GM12878 (cell line): ENCODE measurements at regions of chr1 and their contacts with region 1.

Region 1: DNA sequence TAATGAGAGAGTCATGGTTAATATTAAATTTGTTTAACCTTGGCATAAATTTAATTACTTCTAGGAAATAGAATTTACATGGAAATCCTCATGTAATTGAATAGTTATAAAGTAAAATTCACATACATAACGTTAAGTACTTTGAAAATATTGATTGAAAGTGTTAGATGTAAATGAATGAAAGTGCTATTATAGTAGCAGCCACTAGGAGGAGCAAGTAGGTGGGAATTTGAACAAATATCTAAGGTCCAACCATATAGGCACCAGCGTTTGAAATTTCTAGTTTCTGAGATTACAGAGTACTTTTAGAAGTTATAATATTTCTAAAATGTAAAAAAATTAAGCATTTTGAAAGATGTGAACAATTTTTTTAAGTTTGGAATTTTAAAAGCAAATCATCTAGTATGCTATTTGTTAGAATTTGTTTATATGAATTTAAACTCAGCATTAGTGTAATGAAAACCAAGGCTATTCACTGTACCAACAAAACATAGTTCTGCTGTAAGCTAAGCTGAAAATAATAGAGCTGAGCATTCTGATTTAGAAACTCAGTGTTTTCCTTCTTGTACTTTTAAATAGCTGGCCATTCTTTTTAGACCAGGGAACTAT is 3.3 kb downstream of the B3GALT2 start:
- DNase-seq: no peak
- ATAC-seq: peak; percentile 79
- H3K4me3 ChIP-seq: no peak overlapping the region
- H3K27ac ChIP-seq: no peak overlapping the region
- H3K4me1 ChIP-seq: no peaks in the 10 kb centered on the region
- H3K27me3 ChIP-seq: no peaks in the 10 kb centered on the region
- CTCF ChIP-seq: peak; percentile 61 to 77 (median 65)
- EP300 ChIP-seq: no peak
- POLR2A ChIP-seq: no peak
- RAD21 ChIP-seq: peak; percentile 84

Region 2: GRCh38 chr1:191912517-191912916 is 1270.6 kb before region 1 on chr1:
- CTCF ChIA-PET with region 1: no interaction called
- POLR2A ChIA-PET with region 1: no interaction called
- RAD21 ChIA-PET with region 1: no interaction called
- SMC1A ChIA-PET with region 1: no interaction called
- in situ Hi-C with region 1: no loop called
- intact Hi-C with region 1: no loop called
- DNase-seq: no peak
- ATAC-seq: peak; percentile 65
- H3K4me3 ChIP-seq: no peak overlapping the region
- H3K27ac ChIP-seq: no peak overlapping the region
- H3K4me1 ChIP-seq: no peaks in the 10 kb centered on the region
- H3K27me3 ChIP-seq: no peaks in the 10 kb centered on the region
- CTCF ChIP-seq: no peak
- EP300 ChIP-seq: no peak
- POLR2A ChIP-seq: no peak
- RAD21 ChIP-seq: no peak

Region 3: GRCh38 chr1:193338194-193338593 is 155.1 kb after region 1 on chr1:
- CTCF ChIA-PET with region 1: interaction called, 26 read pairs
- POLR2A ChIA-PET with region 1: no interaction called
- RAD21 ChIA-PET with region 1: interaction called, 17 read pairs
- SMC1A ChIA-PET with region 1: interaction called, 17 read pairs
- in situ Hi-C with region 1: no loop called
- intact Hi-C with region 1: loop called (anchors 2 kb)
- DNase-seq: no peak
- ATAC-seq: peak; percentile 91
- H3K4me3 ChIP-seq: no peak overlapping the region
- H3K27ac ChIP-seq: no peak overlapping the region
- H3K4me1 ChIP-seq: no peaks in the 10 kb centered on the region; the same call in 1 of the 2 replicates
- H3K27me3 ChIP-seq: no peaks in the 10 kb centered on the region
- CTCF ChIP-seq: peak in 2 of 3 experiments; percentile 15 to 34; a peak in 1 of 6 replicates
- EP300 ChIP-seq: no peak
- POLR2A ChIP-seq: no peak
- RAD21 ChIP-seq: peak; percentile 68

Region 4: DNA sequence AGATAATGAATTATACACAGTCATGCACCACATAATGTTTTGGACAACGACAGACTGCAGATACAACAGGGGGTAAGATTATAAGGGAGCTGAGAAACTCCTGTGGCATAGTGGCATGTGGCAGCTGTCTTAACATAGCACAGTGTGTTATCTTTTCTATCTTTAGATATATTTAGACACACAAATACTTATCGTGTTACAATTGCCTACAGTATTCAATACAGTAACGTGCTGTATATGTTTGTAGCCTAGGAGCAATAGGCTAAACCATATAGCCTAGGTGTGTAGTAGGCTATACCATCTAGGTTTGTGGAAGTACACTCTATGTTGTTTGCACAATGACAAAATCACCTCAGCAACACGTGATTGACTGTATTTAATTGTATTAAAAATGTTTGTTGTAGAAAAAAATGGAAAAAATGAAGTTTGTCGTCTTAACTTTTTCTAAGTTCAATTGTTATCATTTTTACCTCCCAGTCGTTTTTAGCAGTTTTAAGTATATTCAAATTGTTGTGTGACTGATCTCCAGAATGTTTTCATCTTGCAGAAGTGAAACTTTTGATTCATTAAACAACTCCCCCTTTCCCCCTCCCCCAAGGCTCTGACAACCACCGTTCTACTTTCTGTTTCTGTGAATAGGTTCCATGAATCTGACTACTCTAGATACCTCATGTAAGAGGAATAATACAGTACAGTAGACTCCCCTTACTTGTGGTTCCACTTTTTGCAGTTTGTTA is 354.3 kb after region 1 on chr1:
- CTCF ChIA-PET with region 1: no interaction called
- POLR2A ChIA-PET with region 1: no interaction called
- RAD21 ChIA-PET with region 1: no interaction called
- SMC1A ChIA-PET with region 1: no interaction called
- in situ Hi-C with region 1: no loop called
- intact Hi-C with region 1: loop called (anchors 10 kb)
- DNase-seq: peak; percentile 79
- ATAC-seq: peak; percentile 95
- H3K4me3 ChIP-seq: no peak overlapping the region
- H3K27ac ChIP-seq: peak overlapping the region; percentile 20; the same call in 1 of the 2 replicates
- H3K4me1 ChIP-seq: peaks cover 30% of the 10 kb centered on the region
- H3K27me3 ChIP-seq: no peaks in the 10 kb centered on the region
- CTCF ChIP-seq: no peak
- EP300 ChIP-seq: peak; percentile 55 to 88; a peak in 3 of 4 replicates
- POLR2A ChIP-seq: no peak
- RAD21 ChIP-seq: peak; percentile 27; the same call in 1 of the 2 replicates